ENCODE measurements at regions of chr5 and their contacts with region 1.

Region 1: GRCh38 chr5:11346336-11346735 is 557.9 kb downstream of the CTNND2 start:
- DNase-seq: no peak

Region 2: GRCh38 chr5:9722601-9723180 is 1623.6 kb before region 1 on chr5:
- intact Hi-C with region 1: loop called in 1 of 2 experiments (anchors 5 kb)
- DNase-seq: no peak

Region 3: GRCh38 chr5:11361768-11362167 is 15.4 kb after region 1 on chr5:
- intact Hi-C with region 1: loop called in 1 of 2 experiments (anchors 2 kb)
- DNase-seq: no peak

Measured in posterior vena cava (tissue), 2 donors.